CD8-positive, alpha-beta T cell (primary cell): ENCODE measurements at regions of chr6 and their contacts with region 1.

Region 1: DNA sequence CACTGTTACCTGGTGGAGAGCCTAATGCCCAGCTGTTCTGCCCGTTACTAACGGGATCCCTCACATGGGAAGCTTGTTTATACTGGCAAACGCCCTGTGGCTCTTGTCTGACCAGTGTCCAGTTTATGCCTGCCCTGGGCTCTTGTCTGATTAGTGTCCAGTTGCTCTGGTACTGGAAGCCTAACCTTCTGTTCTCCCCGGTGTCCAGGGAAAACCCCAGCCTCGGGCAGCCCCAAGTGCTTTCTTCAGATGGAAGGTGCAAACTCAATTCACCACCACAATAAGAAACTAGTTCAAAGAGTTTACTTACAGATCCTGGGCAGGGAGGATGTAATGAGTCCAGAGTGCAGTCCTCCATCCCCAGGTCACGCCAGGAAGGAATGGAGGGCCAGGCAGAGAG is 148.4 kb downstream of the TBXT start:
- DNase-seq: no peak
- ATAC-seq: no peak
- H3K4me3 ChIP-seq: no peak overlapping the region
- H3K4me3 Mint-ChIP-seq: no peak overlapping the region
- H3K27ac ChIP-seq: no peak overlapping the region
- H3K27ac Mint-ChIP-seq: no peak overlapping the region
- H3K4me1 ChIP-seq: no peaks in the 10 kb centered on the region
- H3K4me1 Mint-ChIP-seq: no peaks in the 10 kb centered on the region
- H3K27me3 ChIP-seq: no peaks in the 10 kb centered on the region
- H3K27me3 Mint-ChIP-seq: peaks cover 16% of the 10 kb centered on the region
- CTCF ChIP-seq: no peak

Region 2: DNA sequence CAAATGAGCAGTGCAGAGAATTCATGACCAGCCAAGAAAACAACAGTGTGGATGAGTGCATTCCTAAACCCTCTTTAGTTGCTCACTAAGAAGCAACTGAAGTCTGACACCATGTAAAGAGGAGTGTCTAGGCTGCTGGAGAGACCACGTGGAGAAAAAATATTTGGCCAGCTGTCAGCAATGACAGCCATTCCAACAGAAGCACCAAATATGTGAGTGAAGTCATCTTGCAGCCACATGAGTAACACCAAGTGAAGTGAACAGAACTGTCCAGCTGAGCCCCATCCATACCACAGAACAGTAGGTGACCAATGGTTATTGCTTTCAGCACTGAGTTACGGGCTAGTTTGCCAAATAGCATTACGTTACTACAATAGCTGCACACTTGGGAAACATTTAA is 59.1 kb after region 1 on chr6:
- CTCF ChIA-PET with region 1: no interaction called
- POLR2A ChIA-PET with region 1: no interaction called
- intact Hi-C with region 1: loop called in 1 of 2 experiments (anchors 2 kb)
- DNase-seq: no peak
- ATAC-seq: no peak
- H3K4me3 ChIP-seq: no peak overlapping the region
- H3K4me3 Mint-ChIP-seq: no peak overlapping the region
- H3K27ac ChIP-seq: no peak overlapping the region
- H3K27ac Mint-ChIP-seq: no peak overlapping the region
- H3K4me1 ChIP-seq: no peaks in the 10 kb centered on the region
- H3K4me1 Mint-ChIP-seq: no peaks in the 10 kb centered on the region
- H3K27me3 ChIP-seq: peaks cover 0 to 2% of the 10 kb centered on the region in 2 experiments
- H3K27me3 Mint-ChIP-seq: peaks cover 13% of the 10 kb centered on the region
- CTCF ChIP-seq: no peak